MCF 10A (cell line): ENCODE measurements at regions of chr14 and their contacts with region 1.

Region 1: GRCh38 chr14:35404449-35405303 is at the start of gene NFKBIA:
- DNase-seq: peak; percentile 88
- H3K4me3 Mint-ChIP-seq: peak within 1 kb of the TSS; percentile 93
- H3K27ac Mint-ChIP-seq: peak within 1 kb of the TSS; percentile 96
- H3K4me1 Mint-ChIP-seq: peaks cover 33% of the 10 kb centered on the region
- H3K27me3 Mint-ChIP-seq: no peaks in the 10 kb centered on the region
- CTCF ChIP-seq: no peak
- total RNA-seq, gene NFKBIA: 74.5 and 112 TPM in 2 replicates

Region 2: DNA sequence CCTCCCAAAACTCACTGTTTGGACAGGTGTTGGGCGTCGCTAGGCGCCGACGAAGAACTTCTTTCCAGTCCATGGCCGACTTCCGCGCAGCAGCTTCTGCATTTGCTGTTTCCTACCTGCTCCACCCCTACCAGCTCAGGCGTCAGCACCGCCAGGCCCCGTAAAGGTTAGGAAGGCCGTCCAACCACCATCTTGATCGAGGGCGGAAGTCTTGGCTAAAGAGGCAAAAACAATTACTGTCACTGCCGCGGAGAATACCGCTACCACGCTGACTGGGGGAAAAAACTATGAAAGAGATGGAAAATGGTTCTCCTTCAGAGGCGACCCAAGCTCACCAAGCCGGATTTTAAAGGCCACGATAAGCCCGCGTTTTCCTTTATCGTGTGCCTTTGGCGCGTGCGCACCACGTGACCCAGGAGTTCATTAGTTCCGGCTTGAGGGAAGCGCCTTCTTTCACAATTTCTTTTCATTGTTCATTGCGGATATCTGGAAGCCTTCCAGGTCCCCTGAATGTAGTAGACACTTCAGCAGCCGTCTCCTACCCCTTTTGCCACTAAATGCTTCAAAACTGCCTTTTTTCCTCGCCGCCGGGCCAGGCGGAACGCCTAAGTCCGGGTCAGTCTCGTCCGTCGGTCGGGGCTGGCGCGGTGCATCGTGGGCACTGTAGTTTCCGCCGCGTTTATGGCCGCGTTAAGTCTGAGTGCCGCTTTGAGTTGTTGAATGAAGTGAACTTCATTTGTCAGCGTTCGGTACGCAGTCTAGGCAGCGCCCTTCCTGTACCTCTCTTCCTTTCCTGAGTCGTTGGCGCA is 282.6 kb before region 1 on chr14 and contains the starts of genes PPP2R3C and PRORP:
- CTCF ChIA-PET with region 1: interaction called, 6 read pairs
- POLR2A ChIA-PET with region 1: interaction called, 74 read pairs
- intact Hi-C with region 1: loop called (anchors 1 kb)
- DNase-seq: peak; percentile 99
- H3K4me3 Mint-ChIP-seq: peak within 1 kb of the TSS; percentile 98
- H3K27ac Mint-ChIP-seq: peak within 1 kb of the TSS; percentile 100
- H3K4me1 Mint-ChIP-seq: peaks cover 31% of the 10 kb centered on the region
- H3K27me3 Mint-ChIP-seq: no peaks in the 10 kb centered on the region
- CTCF ChIP-seq: no peak
- total RNA-seq, gene PPP2R3C: 16.9 and 21.6 TPM in 2 replicates
- total RNA-seq, gene PRORP: 27.9 and 30.5 TPM in 2 replicates

Region 3: DNA sequence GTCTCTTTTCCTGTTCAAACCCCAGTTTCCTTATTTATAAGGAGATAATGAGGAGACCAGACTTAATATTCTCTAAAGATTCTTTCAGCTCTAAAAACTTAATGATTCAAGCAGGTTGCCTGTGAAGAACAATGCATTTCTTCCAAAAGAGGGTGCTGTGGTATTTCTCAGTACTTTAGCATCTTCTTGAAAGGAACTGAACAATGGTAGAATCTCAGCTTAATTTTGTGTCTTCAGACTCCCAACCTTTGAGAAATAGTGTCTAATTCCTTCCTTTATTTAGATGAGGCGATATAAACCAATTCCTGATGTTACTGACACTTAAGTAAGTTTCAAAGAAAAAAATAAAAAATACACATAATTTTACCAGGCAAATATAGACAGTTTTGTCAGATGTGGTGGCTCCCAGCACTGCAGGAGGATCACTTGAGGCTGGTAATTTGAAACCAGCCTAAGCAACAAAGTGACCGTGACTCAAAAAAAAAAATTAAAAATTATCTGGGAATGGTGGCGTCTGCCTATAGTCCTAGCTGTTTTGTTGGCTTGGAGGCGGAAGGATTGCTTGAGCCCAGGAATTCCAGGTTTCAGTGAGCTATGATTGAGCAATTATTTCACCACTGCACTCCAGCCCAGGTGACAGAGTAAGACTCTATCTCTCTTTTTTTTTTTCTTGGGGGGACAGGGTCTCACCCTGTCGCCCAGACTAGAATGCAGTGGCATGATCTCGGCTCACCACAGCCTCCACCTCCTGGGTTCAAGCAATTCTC is 189.4 kb before region 1 on chr14:
- CTCF ChIA-PET with region 1: interaction called, 17 read pairs
- POLR2A ChIA-PET with region 1: interaction called, 41 read pairs
- intact Hi-C with region 1: loop called (anchors 1 kb)
- DNase-seq: peak; percentile 61
- H3K4me3 Mint-ChIP-seq: no peak overlapping the region
- H3K27ac Mint-ChIP-seq: peak overlapping the region; percentile 75
- H3K4me1 Mint-ChIP-seq: peaks cover 30% of the 10 kb centered on the region
- H3K27me3 Mint-ChIP-seq: no peaks in the 10 kb centered on the region
- CTCF ChIP-seq: peak; percentile 24

Region 4: GRCh38 chr14:35292051-35292769 is 112.5 kb before region 1 on chr14 and contains the start of gene PSMA6:
- CTCF ChIA-PET with region 1: interaction called, 10 read pairs
- POLR2A ChIA-PET with region 1: interaction called, 178 read pairs
- intact Hi-C with region 1: loop called (anchors 1 kb)
- DNase-seq: peak; percentile 99
- H3K4me3 Mint-ChIP-seq: peak within 1 kb of the TSS; percentile 91
- H3K27ac Mint-ChIP-seq: peak within 1 kb of the TSS; percentile 96
- H3K4me1 Mint-ChIP-seq: peaks cover 11% of the 10 kb centered on the region
- H3K27me3 Mint-ChIP-seq: no peaks in the 10 kb centered on the region
- CTCF ChIP-seq: no peak
- total RNA-seq, gene PSMA6: 260 and 322 TPM in 2 replicates

Region 5: DNA sequence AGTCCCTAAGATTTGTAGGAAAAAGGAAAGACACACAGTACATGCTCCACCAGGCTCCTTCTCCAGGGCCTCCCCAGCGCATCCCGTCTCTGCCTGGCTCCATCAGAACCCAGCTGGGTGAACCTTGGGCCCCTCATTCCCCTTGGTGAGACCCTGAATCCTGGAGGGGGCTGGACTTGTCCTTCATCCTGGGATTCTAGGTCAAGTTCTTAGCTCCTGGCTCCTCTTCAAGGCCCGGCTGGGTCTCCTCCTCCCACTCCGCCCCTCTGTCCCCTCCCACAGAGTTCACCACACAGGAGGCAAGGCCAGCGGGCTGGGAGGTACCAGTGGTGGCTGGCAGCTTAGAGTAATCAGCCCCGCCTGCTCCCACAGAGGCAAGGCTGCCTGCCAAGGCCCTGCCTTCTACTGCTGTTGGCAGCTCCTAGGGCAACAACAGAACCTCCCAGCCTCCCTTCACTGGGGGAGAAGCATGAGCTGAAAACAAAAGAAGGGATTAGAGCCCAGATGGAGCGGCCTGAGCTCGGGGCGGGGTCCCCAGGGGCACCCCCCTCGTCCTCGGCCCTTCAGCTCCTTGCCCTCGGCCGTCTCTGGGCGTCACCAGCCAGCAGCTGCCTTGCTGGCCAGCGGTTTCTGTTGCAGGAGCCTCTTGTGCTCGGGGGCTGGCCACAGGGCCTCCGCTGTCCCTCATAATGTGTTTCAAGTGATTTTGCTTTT is 63.1 kb before region 1 on chr14:
- CTCF ChIA-PET with region 1: interaction called, 41 read pairs
- POLR2A ChIA-PET with region 1: interaction called, 422 read pairs
- intact Hi-C with region 1: loop called (anchors 1 kb)
- DNase-seq: peak; percentile 98
- H3K4me3 Mint-ChIP-seq: peak overlapping the region; percentile 59
- H3K27ac Mint-ChIP-seq: peak overlapping the region; percentile 88
- H3K4me1 Mint-ChIP-seq: peaks cover 29% of the 10 kb centered on the region
- H3K27me3 Mint-ChIP-seq: no peaks in the 10 kb centered on the region
- CTCF ChIP-seq: no peak

Region 6: GRCh38 chr14:35385042-35385839 is 19.4 kb before region 1 on chr14:
- CTCF ChIA-PET with region 1: interaction called, 14 read pairs
- POLR2A ChIA-PET with region 1: interaction called, 49 read pairs
- intact Hi-C with region 1: no loop called
- DNase-seq: peak; percentile 93
- H3K4me3 Mint-ChIP-seq: no peak overlapping the region
- H3K27ac Mint-ChIP-seq: peak overlapping the region; percentile 76
- H3K4me1 Mint-ChIP-seq: peaks cover 20% of the 10 kb centered on the region
- H3K27me3 Mint-ChIP-seq: no peaks in the 10 kb centered on the region
- CTCF ChIP-seq: no peak

Region 7: DNA sequence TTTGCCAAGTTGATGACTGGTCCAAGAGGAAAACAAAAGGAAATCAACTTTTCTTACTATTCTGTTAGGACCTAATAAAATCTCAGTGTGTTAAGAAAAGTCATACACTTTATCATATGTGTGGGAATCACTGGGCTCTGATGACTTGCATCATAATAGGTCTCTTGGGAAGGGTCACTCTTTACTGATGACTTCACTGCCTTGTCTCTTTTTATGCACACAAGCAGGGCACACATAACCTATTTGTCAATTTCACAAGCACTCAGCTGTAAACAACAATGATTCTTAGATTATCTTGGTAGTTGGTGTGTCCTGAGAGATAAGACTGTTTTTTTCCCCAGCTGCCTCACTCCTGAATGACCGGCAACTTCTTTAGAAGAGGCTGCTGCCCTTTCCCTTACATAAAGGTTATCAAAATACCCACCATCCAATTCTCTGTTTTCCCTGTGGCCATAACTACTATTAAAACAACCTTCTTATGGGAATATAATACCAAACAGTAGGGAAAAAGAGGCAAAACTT is 78.4 kb after region 1 on chr14:
- CTCF ChIA-PET with region 1: no interaction called
- POLR2A ChIA-PET with region 1: no interaction called
- intact Hi-C with region 1: no loop called
- DNase-seq: no peak
- H3K4me3 Mint-ChIP-seq: no peak overlapping the region
- H3K27ac Mint-ChIP-seq: no peak overlapping the region
- H3K4me1 Mint-ChIP-seq: no peaks in the 10 kb centered on the region
- H3K27me3 Mint-ChIP-seq: peaks cover 21% of the 10 kb centered on the region
- CTCF ChIP-seq: no peak